ENCODE measurements at regions of chr2 and their contacts with region 1.

Region 1: GRCh38 chr2:32852856-32853255 is 93.9 kb upstream of the LTBP1 start:
- DNase-seq: no peak
- H3K4me3 ChIP-seq: no peak overlapping the region
- H3K27ac ChIP-seq: no peak overlapping the region
- H3K4me1 ChIP-seq: no peaks in the 10 kb centered on the region
- H3K27me3 ChIP-seq: no peaks in the 10 kb centered on the region
- CTCF ChIP-seq: no peak

Region 2: GRCh38 chr2:32887125-32887524 is 34.3 kb after region 1 on chr2:
- CTCF ChIA-PET with region 1: no interaction called
- dilution Hi-C with region 1: loop called (anchors 5 kb)
- in situ Hi-C with region 1: no loop called
- intact Hi-C with region 1: no loop called
- DNase-seq: no peak
- H3K4me3 ChIP-seq: no peak overlapping the region
- H3K27ac ChIP-seq: no peak overlapping the region
- H3K4me1 ChIP-seq: no peaks in the 10 kb centered on the region
- H3K27me3 ChIP-seq: no peaks in the 10 kb centered on the region
- CTCF ChIP-seq: no peak

Region 3: DNA sequence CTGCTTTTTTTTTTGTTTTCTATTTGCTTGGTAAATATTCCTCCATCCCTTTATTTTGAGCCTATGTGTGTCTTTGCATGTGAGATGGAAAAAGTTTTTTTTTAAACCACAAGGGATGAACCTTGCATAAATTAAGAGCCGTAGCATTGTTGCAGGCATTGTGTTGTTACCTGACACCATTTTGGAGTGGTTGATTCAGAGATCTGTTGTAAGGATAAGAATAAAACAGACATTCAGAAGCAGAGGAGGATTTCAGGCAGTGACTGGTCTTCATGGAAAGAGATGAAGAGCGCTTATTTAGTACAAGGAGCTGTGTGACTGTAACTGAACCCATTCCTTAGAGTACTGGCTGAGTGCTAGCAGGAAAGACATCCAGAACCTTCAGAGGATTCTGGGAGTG is 195.1 kb after region 1 on chr2:
- CTCF ChIA-PET with region 1: no interaction called
- dilution Hi-C with region 1: no loop called
- in situ Hi-C with region 1: no loop called
- intact Hi-C with region 1: no loop called
- DNase-seq: peak; percentile 17
- H3K4me3 ChIP-seq: no peak overlapping the region
- H3K27ac ChIP-seq: no peak overlapping the region
- H3K4me1 ChIP-seq: no peaks in the 10 kb centered on the region
- H3K27me3 ChIP-seq: no peaks in the 10 kb centered on the region
- CTCF ChIP-seq: no peak

Region 4: DNA sequence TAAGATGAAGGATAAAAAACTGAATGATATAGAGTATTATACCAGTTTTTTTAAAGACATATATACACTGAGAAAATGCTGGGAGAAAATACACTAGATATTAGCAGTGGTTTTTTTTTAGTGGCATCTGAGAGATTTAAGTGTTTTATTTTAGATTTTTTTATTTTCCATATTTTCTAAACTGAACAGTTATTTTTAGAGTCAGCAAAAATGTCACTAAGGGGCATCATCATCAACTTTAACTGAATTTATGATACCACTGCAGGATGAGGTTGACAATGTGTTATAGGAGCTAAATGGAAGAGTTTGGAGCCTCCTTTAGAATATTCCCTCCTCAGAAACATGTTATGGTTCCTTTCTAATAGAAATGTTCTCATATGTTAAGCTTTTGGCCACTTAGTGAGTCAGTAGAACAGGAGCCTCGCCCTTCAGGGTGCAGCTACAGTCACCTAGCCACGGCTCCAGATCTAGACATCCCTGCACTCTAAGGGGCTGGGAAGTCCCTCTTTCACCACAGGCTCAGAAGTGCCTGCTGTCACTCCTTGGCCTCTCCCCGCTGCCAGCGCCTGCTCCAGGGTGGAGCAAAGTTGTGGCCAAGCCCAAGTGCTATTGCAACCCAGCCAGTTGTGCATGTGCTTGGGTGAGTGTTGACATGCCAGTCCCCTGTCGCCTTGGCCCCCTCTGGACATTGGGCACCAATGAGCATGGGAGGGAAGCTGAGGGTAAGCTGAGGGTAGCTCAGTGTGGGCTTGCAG is 412.9 kb after region 1 on chr2:
- CTCF ChIA-PET with region 1: no interaction called
- dilution Hi-C with region 1: no loop called
- in situ Hi-C with region 1: no loop called
- intact Hi-C with region 1: no loop called
- DNase-seq: peak; percentile 76
- H3K4me3 ChIP-seq: no peak overlapping the region
- H3K27ac ChIP-seq: peak overlapping the region; percentile 22
- H3K4me1 ChIP-seq: peaks cover 8% of the 10 kb centered on the region
- H3K27me3 ChIP-seq: no peaks in the 10 kb centered on the region
- CTCF ChIP-seq: no peak